SK-N-SH (cell line): ENCODE measurements at regions of chr1 and their contacts with region 1.

Region 1: GRCh38 chr1:216566641-216567205 is 143.5 kb upstream of the USH2A start:
- DNase-seq: no peak
- H3K4me3 ChIP-seq: no peak overlapping the region
- H3K27ac ChIP-seq: peak overlapping the region in 1 of 2 experiments; percentile 16; a peak in 1 of 4 replicates
- H3K4me1 ChIP-seq: no peaks in the 10 kb centered on the region; a peak in 2 of 4 replicates
- H3K27me3 ChIP-seq: no peaks in the 10 kb centered on the region
- CTCF ChIP-seq: peak; percentile 64
- EP300 ChIP-seq: no peak
- RAD21 ChIP-seq: peak; percentile 52

Region 2: DNA sequence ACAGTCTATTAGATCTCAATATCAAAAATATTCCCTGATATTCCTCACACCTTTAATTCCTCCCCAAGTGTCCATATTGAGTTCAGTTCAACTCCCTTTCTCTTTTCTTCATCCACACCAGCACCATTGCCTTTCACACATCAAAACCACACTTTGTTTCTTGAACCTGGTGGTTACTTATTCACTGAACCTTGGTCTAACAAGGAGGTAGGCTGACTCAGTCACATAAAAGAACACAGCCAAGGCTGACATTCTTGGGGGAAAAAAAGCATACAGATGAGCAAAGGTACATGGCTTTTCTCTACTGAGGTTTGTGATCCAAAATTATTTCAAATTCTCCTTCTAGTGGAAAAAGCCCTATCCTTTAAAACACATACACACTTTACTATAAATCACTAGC is 11.8 kb before region 1 on chr1:
- CTCF ChIA-PET with region 1: interaction called, 14 read pairs
- POLR2A ChIA-PET with region 1: no interaction called
- DNase-seq: no peak
- H3K4me3 ChIP-seq: no peak overlapping the region
- H3K27ac ChIP-seq: peak overlapping the region in 1 of 2 experiments; percentile 82; a peak in 1 of 4 replicates
- H3K4me1 ChIP-seq: peaks cover 0 to 10% of the 10 kb centered on the region in 2 experiments; a peak in 2 of 4 replicates
- H3K27me3 ChIP-seq: no peaks in the 10 kb centered on the region
- CTCF ChIP-seq: no peak
- EP300 ChIP-seq: no peak
- RAD21 ChIP-seq: no peak

Region 3: GRCh38 chr1:216600730-216601609 is 34.2 kb after region 1 on chr1:
- CTCF ChIA-PET with region 1: interaction called, 11 read pairs
- POLR2A ChIA-PET with region 1: no interaction called
- DNase-seq: peak; percentile 88
- H3K4me3 ChIP-seq: peak overlapping the region; percentile 64 to 70
- H3K27ac ChIP-seq: peak overlapping the region; percentile 82 to 99
- H3K4me1 ChIP-seq: peaks cover 0 to 44% of the 10 kb centered on the region in 2 experiments; a peak in 2 of 4 replicates
- H3K27me3 ChIP-seq: no peaks in the 10 kb centered on the region
- CTCF ChIP-seq: peak; percentile 63
- EP300 ChIP-seq: peak in 1 of 2 experiments; percentile 17; a peak in 2 of 4 replicates
- RAD21 ChIP-seq: peak; percentile 17; the same call in 1 of the 2 replicates

Region 4: GRCh38 chr1:216723274-216723780 is 156.6 kb after region 1 on chr1 and contains the start of gene ESRRG:
- CTCF ChIA-PET with region 1: interaction called, 15 read pairs
- POLR2A ChIA-PET with region 1: no interaction called
- DNase-seq: peak; percentile 75
- H3K4me3 ChIP-seq: peak within 1 kb of the TSS; percentile 61 to 71
- H3K27ac ChIP-seq: peak within 1 kb of the TSS in 1 of 2 experiments; percentile 76; a peak in 2 of 4 replicates
- H3K4me1 ChIP-seq: peaks cover 0 to 4% of the 10 kb centered on the region in 2 experiments; a peak in 2 of 4 replicates
- H3K27me3 ChIP-seq: no peaks in the 10 kb centered on the region
- CTCF ChIP-seq: no peak
- EP300 ChIP-seq: peak in 1 of 2 experiments; percentile 27; a peak in 1 of 4 replicates
- RAD21 ChIP-seq: no peak
- polyA plus RNA-seq, gene ESRRG: 0.26 and 0.57 TPM in 2 replicates